Activated CD8-positive, alpha-beta T cell treated with anti-CD3 and anti-CD28 coated beads for 36 hours (primary cell): ENCODE measurements at regions of chr15 and their contacts with region 1.

Region 1: GRCh38 chr15:64093627-64094417 is at the start of gene CIAO2A:
- DNase-seq: peak; percentile 98
- ATAC-seq: peak; percentile 85
- H3K4me3 Mint-ChIP-seq: peak within 1 kb of the TSS; percentile 91
- H3K27ac Mint-ChIP-seq: peak within 1 kb of the TSS; percentile 97
- H3K4me1 Mint-ChIP-seq: peaks cover 49% of the 10 kb centered on the region
- H3K27me3 Mint-ChIP-seq: no peaks in the 10 kb centered on the region
- CTCF ChIP-seq: no peak
- total RNA-seq, gene CIAO2A: 88.3 to 99.4 TPM

Region 2: DNA sequence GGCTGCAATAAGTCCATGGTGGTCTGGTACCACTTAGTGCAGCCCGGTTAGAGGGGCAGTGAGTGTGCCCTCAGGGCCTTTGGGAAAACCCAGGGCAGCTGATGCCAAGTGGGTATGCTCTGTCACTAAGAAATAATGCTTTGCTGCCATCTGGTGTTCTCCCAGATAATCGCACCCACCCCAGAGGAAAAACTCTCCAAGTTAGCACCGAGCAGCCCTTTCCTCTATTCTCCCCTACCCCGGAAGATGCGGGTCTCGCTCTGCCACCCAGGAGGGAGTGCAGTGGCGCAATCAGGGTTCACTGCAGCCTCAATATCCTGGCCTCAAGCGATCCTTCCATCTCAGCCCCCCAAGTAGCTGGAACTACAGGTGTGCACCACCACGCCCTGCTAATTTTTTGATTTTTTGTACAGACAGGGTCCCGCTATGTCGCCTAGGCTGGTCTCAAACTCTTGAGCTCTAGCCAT is 26.2 kb before region 1 on chr15:
- CTCF ChIA-PET with region 1: interaction called, 24 read pairs
- POLR2A ChIA-PET with region 1: interaction called, 3 read pairs
- intact Hi-C with region 1: no loop called
- DNase-seq: peak; percentile 80
- ATAC-seq: peak; percentile 89
- H3K4me3 Mint-ChIP-seq: no peak overlapping the region
- H3K27ac Mint-ChIP-seq: no peak overlapping the region
- H3K4me1 Mint-ChIP-seq: peaks cover 4% of the 10 kb centered on the region
- H3K27me3 Mint-ChIP-seq: no peaks in the 10 kb centered on the region
- CTCF ChIP-seq: peak; percentile 81

Region 3: GRCh38 chr15:64315136-64315660 is 221.4 kb after region 1 on chr15:
- CTCF ChIA-PET with region 1: no interaction called
- POLR2A ChIA-PET with region 1: no interaction called
- intact Hi-C with region 1: no loop called
- DNase-seq: no peak
- ATAC-seq: no peak
- H3K4me3 Mint-ChIP-seq: no peak overlapping the region
- H3K27ac Mint-ChIP-seq: no peak overlapping the region
- H3K4me1 Mint-ChIP-seq: peaks cover 2% of the 10 kb centered on the region
- H3K27me3 Mint-ChIP-seq: no peaks in the 10 kb centered on the region
- CTCF ChIP-seq: no peak